Activated T-helper 2 cell treated with anti-CD3 and anti-CD28 coated beads, Interferon-gamma antibody, Interleukin-2, Interleukin-4, amounts not matched to agents 10 μg/mL and 5 μg/mL and 100 μg/mL, durations not matched to agents 14 hours and 24 hours and 36 hours (primary cell): ENCODE measurements at regions of chr3 and their contacts with region 1.

Region 1: DNA sequence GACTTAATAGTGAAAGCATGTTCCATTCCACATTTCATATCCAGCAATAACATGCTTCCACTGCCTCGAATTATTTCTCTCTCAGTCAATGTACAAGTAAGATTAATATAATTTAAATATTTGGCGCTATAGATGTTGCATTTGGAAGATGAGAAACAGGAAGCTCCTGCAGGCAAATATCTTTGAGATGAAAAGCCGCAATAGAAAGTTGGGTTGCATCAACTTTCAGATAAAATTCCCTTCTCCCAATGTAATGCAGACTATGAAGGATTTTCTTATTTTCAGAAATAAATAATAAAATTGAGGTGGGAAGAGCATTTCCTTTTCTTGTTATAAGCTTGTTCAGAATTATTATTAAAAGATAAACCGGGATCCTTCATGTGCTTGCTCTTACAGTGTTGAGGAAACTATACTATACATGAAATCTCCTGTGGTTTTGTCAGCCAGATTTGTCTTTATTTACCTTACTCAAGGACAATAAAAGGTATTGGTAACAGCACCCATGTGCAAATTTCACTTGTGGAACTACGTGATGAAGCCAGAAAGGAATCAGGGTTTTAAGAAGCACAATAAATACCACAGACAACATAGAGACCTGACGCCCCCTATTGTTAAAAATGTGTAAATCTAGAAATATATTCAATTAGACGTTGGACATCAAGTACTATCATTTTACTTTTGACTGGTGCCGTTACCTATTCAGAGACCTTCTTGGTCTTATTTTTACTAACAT is 307.0 kb downstream of the ARPP21 start:
- DNase-seq: no peak
- H3K4me3 Mint-ChIP-seq: no peak overlapping the region
- H3K27ac Mint-ChIP-seq: no peak overlapping the region
- H3K4me1 Mint-ChIP-seq: peaks cover 3% of the 10 kb centered on the region
- H3K27me3 Mint-ChIP-seq: no peaks in the 10 kb centered on the region

Region 2: DNA sequence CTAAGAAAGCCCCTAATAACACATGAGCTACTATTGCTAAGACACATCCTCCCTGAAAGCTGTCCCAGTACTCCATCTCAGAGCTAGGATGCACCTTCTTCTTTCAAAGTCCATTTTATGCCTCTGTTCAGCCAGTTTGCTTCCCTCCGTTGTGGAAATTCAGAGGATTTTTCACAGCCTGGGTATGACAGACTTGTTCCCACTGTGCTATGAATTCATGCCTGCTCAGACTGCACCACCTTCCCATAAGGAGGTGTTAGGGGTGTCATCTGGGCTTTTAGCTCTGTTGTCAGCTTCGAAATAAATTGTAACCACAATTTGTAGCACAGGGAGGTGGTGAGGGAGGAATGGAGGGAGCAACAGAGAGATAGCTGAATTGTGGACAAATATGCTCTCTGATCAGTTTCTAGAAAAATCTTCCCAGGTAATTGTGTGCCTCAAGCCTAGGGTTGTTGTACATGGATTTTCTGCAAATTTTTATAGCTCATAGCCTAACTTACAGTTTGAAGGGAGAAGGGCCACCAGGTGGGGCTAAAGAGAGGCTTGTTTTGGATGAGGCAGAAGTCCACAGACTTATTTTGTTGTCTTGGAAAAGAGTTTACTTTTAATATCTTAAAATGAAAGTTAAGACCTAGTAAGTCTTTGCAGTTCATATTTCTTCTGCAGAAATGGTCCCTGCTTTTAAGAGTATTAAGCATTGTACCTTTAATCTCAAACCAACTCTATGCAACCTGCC is 1685.8 kb before region 1 on chr3:
- intact Hi-C with region 1: loop called (anchors 5 kb)
- DNase-seq: no peak
- H3K4me3 Mint-ChIP-seq: no peak overlapping the region
- H3K27ac Mint-ChIP-seq: no peak overlapping the region
- H3K4me1 Mint-ChIP-seq: peaks cover 3% of the 10 kb centered on the region
- H3K27me3 Mint-ChIP-seq: peaks cover 1% of the 10 kb centered on the region